MCF 10A (cell line): ENCODE measurements at regions of chr13 and their contacts with region 1.

Region 1: GRCh38 chr13:27988520-27988919 is at the start of gene URAD:
- DNase-seq: no peak
- H3K4me3 Mint-ChIP-seq: no peak within 1 kb of the TSS
- H3K27ac Mint-ChIP-seq: no peak within 1 kb of the TSS
- H3K4me1 Mint-ChIP-seq: no peaks in the 10 kb centered on the region
- H3K27me3 Mint-ChIP-seq: peaks cover 14% of the 10 kb centered on the region
- CTCF ChIP-seq: no peak
- total RNA-seq, gene URAD: not detected in 2 replicates

Region 2: GRCh38 chr13:27868641-27869435 is 119.7 kb before region 1 on chr13:
- CTCF ChIA-PET with region 1: interaction called, 13 read pairs
- POLR2A ChIA-PET with region 1: no interaction called
- intact Hi-C with region 1: no loop called
- DNase-seq: peak; percentile 26
- H3K4me3 Mint-ChIP-seq: no peak overlapping the region
- H3K27ac Mint-ChIP-seq: no peak overlapping the region
- H3K4me1 Mint-ChIP-seq: peaks cover 6% of the 10 kb centered on the region
- H3K27me3 Mint-ChIP-seq: no peaks in the 10 kb centered on the region
- CTCF ChIP-seq: peak; percentile 60

Region 3: GRCh38 chr13:28128030-28128429 is 139.5 kb after region 1 on chr13:
- CTCF ChIA-PET with region 1: no interaction called
- POLR2A ChIA-PET with region 1: no interaction called
- intact Hi-C with region 1: no loop called
- DNase-seq: no peak
- H3K4me3 Mint-ChIP-seq: no peak overlapping the region
- H3K27ac Mint-ChIP-seq: no peak overlapping the region
- H3K4me1 Mint-ChIP-seq: no peaks in the 10 kb centered on the region
- H3K27me3 Mint-ChIP-seq: no peaks in the 10 kb centered on the region
- CTCF ChIP-seq: no peak